ENCODE measurements at regions of chr1 and their contacts with region 1.

Region 1: DNA sequence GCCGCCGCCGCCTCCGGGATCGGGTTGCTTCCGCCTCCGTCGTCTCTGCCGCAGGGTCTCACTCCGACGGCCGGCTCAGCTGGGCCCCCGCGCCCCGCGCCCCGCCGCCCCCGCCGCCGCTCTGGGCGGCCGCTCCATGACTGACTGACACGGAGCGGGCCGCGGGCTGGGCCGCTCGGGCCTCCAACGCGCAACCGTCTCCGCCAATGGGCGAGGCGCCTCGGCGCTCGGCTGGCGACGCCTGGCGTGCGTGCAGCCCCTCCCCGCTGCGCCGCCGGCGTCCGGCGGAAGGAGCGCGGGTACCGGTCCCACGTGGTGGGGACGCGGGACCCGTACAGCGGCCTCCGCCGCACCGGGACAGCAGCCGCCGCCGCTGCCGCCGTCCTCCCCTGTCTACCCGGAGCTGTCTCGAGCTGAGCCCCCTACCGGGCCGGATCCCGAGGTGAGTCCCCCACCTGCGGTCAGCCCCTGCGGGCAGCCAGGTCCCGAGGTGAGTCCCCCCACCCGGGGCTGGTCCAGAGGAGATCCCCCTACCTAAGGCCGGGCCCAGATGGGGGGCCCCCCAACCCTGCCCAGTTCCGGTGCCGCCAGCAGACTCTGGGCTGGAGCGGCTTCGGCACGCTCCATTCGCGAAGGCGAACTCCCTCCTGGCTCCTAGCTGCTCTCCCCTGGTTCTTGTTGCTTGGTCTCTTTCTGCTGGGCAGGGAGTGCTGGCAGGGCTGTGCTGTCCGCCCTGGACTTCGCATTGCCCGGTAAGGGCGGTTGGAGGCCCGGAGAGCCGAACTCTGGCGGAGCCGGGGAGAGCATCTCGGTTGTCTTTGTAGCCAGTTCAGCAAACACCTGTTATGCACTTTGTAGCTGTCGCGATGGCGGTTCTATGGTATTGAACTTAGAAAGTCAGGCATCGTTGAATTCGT is at the starts of genes TAF5L and URB2:
- DNase-seq: peak; percentile 63 to 94 (median 78)
- ATAC-seq: peak; percentile 91
- H3K4me3 ChIP-seq: peak within 1 kb of the TSS; percentile 93
- H3K4me3 Mint-ChIP-seq: peak within 1 kb of the TSS; percentile 99
- H3K27ac ChIP-seq: peak within 1 kb of the TSS; percentile 67 to 76
- H3K27ac Mint-ChIP-seq: peak within 1 kb of the TSS; percentile 91
- H3K4me1 ChIP-seq: peaks cover 26% of the 10 kb centered on the region
- H3K4me1 Mint-ChIP-seq: peaks cover 62% of the 10 kb centered on the region
- H3K27me3 ChIP-seq: no peaks in the 10 kb centered on the region
- H3K27me3 Mint-ChIP-seq: no peaks in the 10 kb centered on the region
- CTCF ChIP-seq: no peak
- total RNA-seq, gene TAF5L: 19.5 to 21.9 TPM
- total RNA-seq, gene URB2: 4.1 to 4.2 TPM

Region 2: DNA sequence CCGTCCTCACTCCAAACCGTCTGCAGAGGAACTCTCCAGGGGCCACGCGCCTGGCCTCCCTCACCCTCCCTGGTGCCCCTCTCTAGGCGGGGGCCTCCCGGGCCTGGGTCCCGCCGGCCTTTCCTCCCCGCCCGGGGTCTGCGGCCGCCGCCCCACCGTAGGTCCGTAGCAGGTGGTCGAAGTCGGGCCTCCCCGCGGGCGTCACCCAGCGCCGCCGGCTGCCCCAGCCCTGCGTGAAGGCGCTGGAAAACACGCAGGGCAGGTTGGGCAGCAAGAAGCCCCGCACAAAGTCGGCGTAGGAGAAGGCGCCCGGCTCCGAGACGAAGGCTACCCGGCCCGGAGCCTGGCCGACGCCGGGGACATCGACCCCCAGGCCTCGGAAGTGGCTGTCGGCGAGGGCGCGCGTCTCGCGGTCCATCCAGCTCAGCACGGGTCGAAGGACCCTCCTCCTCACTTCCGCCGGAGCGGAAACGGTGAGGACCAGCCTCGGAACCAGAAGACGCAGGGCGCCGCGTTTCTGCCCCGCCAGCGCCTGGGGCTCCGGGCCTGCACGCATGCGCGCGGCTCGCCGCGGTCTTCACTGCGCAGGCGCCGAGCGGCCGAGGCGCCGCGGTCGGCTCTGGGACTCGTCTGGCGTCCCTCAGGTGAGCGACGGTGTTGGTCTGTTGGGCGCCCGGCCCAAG is 1891.2 kb before region 1 on chr1 and contains the starts of genes JMJD4 and SNAP47:
- CTCF ChIA-PET with region 1: no interaction called
- POLR2A ChIA-PET with region 1: no interaction called
- intact Hi-C with region 1: loop called in 1 of 2 experiments (anchors 10 kb)
- DNase-seq: peak; percentile 86 to 96 (median 92)
- ATAC-seq: peak; percentile 90
- H3K4me3 ChIP-seq: peak within 1 kb of the TSS; percentile 71
- H3K4me3 Mint-ChIP-seq: peak within 1 kb of the TSS; percentile 92
- H3K27ac ChIP-seq: peak within 1 kb of the TSS in 1 of 2 donors; percentile 69
- H3K27ac Mint-ChIP-seq: peak within 1 kb of the TSS; percentile 83
- H3K4me1 ChIP-seq: peaks cover 37% of the 10 kb centered on the region
- H3K4me1 Mint-ChIP-seq: peaks cover 56% of the 10 kb centered on the region
- H3K27me3 ChIP-seq: no peaks in the 10 kb centered on the region
- H3K27me3 Mint-ChIP-seq: no peaks in the 10 kb centered on the region
- CTCF ChIP-seq: no peak
- total RNA-seq, gene JMJD4: 11.4 to 11.9 TPM
- total RNA-seq, gene SNAP47: 12.8 to 14.0 TPM

Region 3: DNA sequence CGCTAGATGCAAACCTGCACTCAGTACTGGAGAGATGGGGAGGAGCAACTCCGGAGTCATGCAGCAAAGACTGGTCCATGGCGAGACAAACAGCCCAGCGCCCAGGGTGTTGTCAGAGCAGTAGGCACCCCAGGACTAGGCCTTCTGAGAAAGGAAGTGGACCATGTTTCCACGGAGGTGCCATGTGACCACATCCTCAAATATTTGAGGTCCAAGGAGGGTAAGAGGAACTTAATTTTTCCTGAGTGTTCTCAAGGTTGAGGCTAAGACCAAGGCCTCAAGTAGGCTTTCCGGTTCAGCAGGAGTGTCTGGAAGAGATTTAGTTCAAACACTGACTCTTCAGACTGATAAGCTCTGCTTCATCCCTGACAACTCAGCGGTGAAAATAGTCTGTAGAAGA is 704.7 kb before region 1 on chr1:
- CTCF ChIA-PET with region 1: no interaction called
- POLR2A ChIA-PET with region 1: no interaction called
- intact Hi-C with region 1: no loop called
- DNase-seq: peak in 3 of 14 experiments; percentile 17 to 37 (median 23)
- ATAC-seq: no peak
- H3K4me3 ChIP-seq: no peak overlapping the region
- H3K4me3 Mint-ChIP-seq: no peak overlapping the region
- H3K27ac ChIP-seq: no peak overlapping the region
- H3K27ac Mint-ChIP-seq: no peak overlapping the region
- H3K4me1 ChIP-seq: peaks cover 4% of the 10 kb centered on the region
- H3K4me1 Mint-ChIP-seq: no peaks in the 10 kb centered on the region
- H3K27me3 ChIP-seq: no peaks in the 10 kb centered on the region
- H3K27me3 Mint-ChIP-seq: no peaks in the 10 kb centered on the region
- CTCF ChIP-seq: no peak

Region 4: GRCh38 chr1:229270547-229271447 is 355.4 kb before region 1 on chr1 and contains the start of gene RAB4A:
- CTCF ChIA-PET with region 1: no interaction called
- POLR2A ChIA-PET with region 1: no interaction called
- intact Hi-C with region 1: loop called in 1 of 2 experiments (anchors 5 kb)
- DNase-seq: peak; percentile 38 to 90 (median 70)
- ATAC-seq: peak; percentile 87
- H3K4me3 ChIP-seq: peak within 1 kb of the TSS; percentile 80
- H3K4me3 Mint-ChIP-seq: peak within 1 kb of the TSS; percentile 99
- H3K27ac ChIP-seq: peak within 1 kb of the TSS in 1 of 2 donors; percentile 41
- H3K27ac Mint-ChIP-seq: peak within 1 kb of the TSS; percentile 77
- H3K4me1 ChIP-seq: peaks cover 34% of the 10 kb centered on the region
- H3K4me1 Mint-ChIP-seq: peaks cover 35% of the 10 kb centered on the region
- H3K27me3 ChIP-seq: no peaks in the 10 kb centered on the region
- H3K27me3 Mint-ChIP-seq: no peaks in the 10 kb centered on the region
- CTCF ChIP-seq: no peak
- total RNA-seq, gene RAB4A: 26.7 to 28.7 TPM

Region 5: GRCh38 chr1:229410692-229411443 is 215.3 kb before region 1 on chr1:
- CTCF ChIA-PET with region 1: no interaction called
- POLR2A ChIA-PET with region 1: no interaction called
- intact Hi-C with region 1: no loop called
- DNase-seq: no peak
- ATAC-seq: no peak
- H3K4me3 ChIP-seq: no peak overlapping the region
- H3K4me3 Mint-ChIP-seq: peak overlapping the region; percentile 23
- H3K27ac ChIP-seq: no peak overlapping the region
- H3K27ac Mint-ChIP-seq: no peak overlapping the region
- H3K4me1 ChIP-seq: peaks cover 19% of the 10 kb centered on the region
- H3K4me1 Mint-ChIP-seq: peaks cover 11% of the 10 kb centered on the region
- H3K27me3 ChIP-seq: peaks cover 36 to 45% of the 10 kb centered on the region in 2 experiments
- H3K27me3 Mint-ChIP-seq: peaks cover 68% of the 10 kb centered on the region
- CTCF ChIP-seq: no peak

Region 6: DNA sequence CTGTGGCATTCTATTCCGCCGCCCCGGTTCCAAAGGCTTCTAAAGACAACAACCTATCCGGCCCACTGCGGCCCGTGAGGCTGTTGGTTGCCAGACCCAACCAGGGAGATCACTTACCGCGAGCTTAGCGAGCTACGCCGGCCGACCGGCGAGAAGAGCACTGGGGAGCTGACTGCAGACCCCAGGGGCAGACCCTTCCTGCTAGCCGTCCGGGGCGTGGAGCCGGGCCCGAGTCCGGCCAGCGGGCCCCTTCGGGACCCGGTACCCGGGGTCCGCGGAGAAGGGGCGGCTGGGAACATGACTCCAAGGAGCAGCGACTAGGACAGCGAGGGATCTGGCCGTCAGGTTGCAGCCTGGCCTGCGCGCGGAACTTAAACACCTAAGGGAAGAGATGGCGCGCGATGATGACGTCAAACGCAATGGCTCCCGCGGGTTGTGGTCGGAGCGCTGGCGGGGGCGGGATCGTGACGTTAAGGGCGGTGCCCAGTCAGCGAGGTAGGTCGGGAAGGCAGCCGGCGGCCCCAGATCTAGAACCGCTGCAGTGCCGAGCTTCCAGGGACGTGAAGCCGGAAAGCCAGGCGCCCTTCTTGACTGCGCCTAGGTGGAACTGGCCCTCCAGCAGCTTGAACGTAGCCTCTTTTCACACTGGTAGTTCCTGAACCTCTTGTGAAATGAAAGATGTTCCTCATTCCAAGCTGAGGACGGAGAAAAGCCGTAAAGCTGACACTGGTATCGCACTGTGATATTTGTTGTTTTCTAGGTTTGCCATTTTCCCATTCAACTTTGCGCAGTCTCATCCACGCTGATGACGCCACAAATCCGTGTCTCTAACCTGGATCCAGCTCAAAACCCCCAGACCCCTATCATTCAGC is 118.0 kb before region 1 on chr1 and contains the start of gene NUP133:
- CTCF ChIA-PET with region 1: no interaction called
- POLR2A ChIA-PET with region 1: interaction called, 5 read pairs
- intact Hi-C with region 1: loop called in 1 of 2 experiments (anchors 5 kb)
- DNase-seq: peak; percentile 96 to 100 (median 98)
- ATAC-seq: peak; percentile 97
- H3K4me3 ChIP-seq: peak within 1 kb of the TSS; percentile 98
- H3K4me3 Mint-ChIP-seq: peak within 1 kb of the TSS; percentile 97
- H3K27ac ChIP-seq: peak within 1 kb of the TSS; percentile 90 to 93
- H3K27ac Mint-ChIP-seq: peak within 1 kb of the TSS; percentile 97
- H3K4me1 ChIP-seq: peaks cover 19% of the 10 kb centered on the region
- H3K4me1 Mint-ChIP-seq: peaks cover 33% of the 10 kb centered on the region
- H3K27me3 ChIP-seq: no peaks in the 10 kb centered on the region
- H3K27me3 Mint-ChIP-seq: no peaks in the 10 kb centered on the region
- CTCF ChIP-seq: no peak
- total RNA-seq, gene NUP133: 42.0 to 45.3 TPM

Region 7: GRCh38 chr1:229594227-229595008 is 31.8 kb before region 1 on chr1:
- CTCF ChIA-PET with region 1: no interaction called
- POLR2A ChIA-PET with region 1: no interaction called
- intact Hi-C with region 1: no loop called
- DNase-seq: no peak
- ATAC-seq: no peak
- H3K4me3 ChIP-seq: no peak overlapping the region
- H3K4me3 Mint-ChIP-seq: no peak overlapping the region
- H3K27ac ChIP-seq: no peak overlapping the region
- H3K27ac Mint-ChIP-seq: no peak overlapping the region
- H3K4me1 ChIP-seq: no peaks in the 10 kb centered on the region
- H3K4me1 Mint-ChIP-seq: no peaks in the 10 kb centered on the region
- H3K27me3 ChIP-seq: no peaks in the 10 kb centered on the region
- H3K27me3 Mint-ChIP-seq: no peaks in the 10 kb centered on the region
- CTCF ChIP-seq: no peak

Region 8: GRCh38 chr1:230066466-230067404 is 440.6 kb after region 1 on chr1 and contains the start of gene GALNT2:
- CTCF ChIA-PET with region 1: no interaction called
- POLR2A ChIA-PET with region 1: interaction called, 3 read pairs
- intact Hi-C with region 1: loop called (anchors 5 to 10 kb)
- DNase-seq: peak; percentile 74 to 97 (median 86)
- ATAC-seq: peak; percentile 91
- H3K4me3 ChIP-seq: peak within 1 kb of the TSS; percentile 85
- H3K4me3 Mint-ChIP-seq: peak within 1 kb of the TSS; percentile 97
- H3K27ac ChIP-seq: peak within 1 kb of the TSS; percentile 46 to 73
- H3K27ac Mint-ChIP-seq: peak within 1 kb of the TSS; percentile 93
- H3K4me1 ChIP-seq: peaks cover 15% of the 10 kb centered on the region
- H3K4me1 Mint-ChIP-seq: peaks cover 42% of the 10 kb centered on the region
- H3K27me3 ChIP-seq: no peaks in the 10 kb centered on the region
- H3K27me3 Mint-ChIP-seq: no peaks in the 10 kb centered on the region
- CTCF ChIP-seq: no peak
- total RNA-seq, gene GALNT2: 11.0 to 11.4 TPM

Measured in CD4-positive, alpha-beta T cell (primary cell).